ENCODE measurements at regions of chr9 and their contacts with region 1.

Region 1: GRCh38 chr9:71911253-71912074 is at the start of gene C9orf85:
- DNase-seq: peak; percentile 99
- H3K4me3 Mint-ChIP-seq: peak within 1 kb of the TSS; percentile 100
- H3K27ac Mint-ChIP-seq: peak within 1 kb of the TSS; percentile 99
- H3K4me1 Mint-ChIP-seq: peaks cover 56% of the 10 kb centered on the region
- H3K27me3 Mint-ChIP-seq: no peaks in the 10 kb centered on the region
- total RNA-seq, gene C9orf85: 9.4 and 11.6 TPM in 2 replicates

Region 2: DNA sequence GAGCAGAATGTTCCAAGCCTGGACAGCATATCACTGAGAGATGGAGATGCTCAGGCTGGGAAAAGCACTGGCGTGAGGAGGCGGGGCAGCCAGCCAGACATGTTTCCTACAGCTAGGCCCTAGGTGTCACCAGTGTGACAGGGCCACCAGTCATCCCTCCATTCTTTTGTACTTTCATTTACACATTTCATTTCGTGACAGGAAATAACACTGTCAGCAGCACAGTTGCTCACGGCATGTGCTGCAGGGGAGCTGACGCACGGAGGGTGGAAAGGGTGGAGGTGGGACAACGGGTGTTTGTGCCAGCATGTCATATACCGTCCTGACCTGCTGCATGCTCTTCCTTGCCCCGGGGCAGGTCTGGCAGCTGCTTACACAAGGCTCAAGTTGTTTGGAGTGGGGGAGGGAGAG is 128.3 kb before region 1 on chr9:
- intact Hi-C with region 1: loop called (anchors 1 kb)
- DNase-seq: peak; percentile 94
- H3K4me3 Mint-ChIP-seq: peak overlapping the region; percentile 80
- H3K27ac Mint-ChIP-seq: peak overlapping the region; percentile 95
- H3K4me1 Mint-ChIP-seq: peaks cover 43% of the 10 kb centered on the region
- H3K27me3 Mint-ChIP-seq: no peaks in the 10 kb centered on the region

Region 3: GRCh38 chr9:71795097-71795813 is 116.2 kb before region 1 on chr9:
- intact Hi-C with region 1: loop called (anchors 5 kb)
- DNase-seq: peak; percentile 76
- H3K4me3 Mint-ChIP-seq: peak overlapping the region; percentile 74
- H3K27ac Mint-ChIP-seq: peak overlapping the region; percentile 85
- H3K4me1 Mint-ChIP-seq: peaks cover 32% of the 10 kb centered on the region
- H3K27me3 Mint-ChIP-seq: no peaks in the 10 kb centered on the region

Region 4: GRCh38 chr9:71858812-71859211 is 52.7 kb before region 1 on chr9:
- intact Hi-C with region 1: loop called (anchors 1 kb)
- DNase-seq: peak; percentile 59
- H3K4me3 Mint-ChIP-seq: peak overlapping the region; percentile 8
- H3K27ac Mint-ChIP-seq: peak overlapping the region; percentile 38
- H3K4me1 Mint-ChIP-seq: peaks cover 19% of the 10 kb centered on the region
- H3K27me3 Mint-ChIP-seq: no peaks in the 10 kb centered on the region

Region 5: GRCh38 chr9:71897577-71897976 is 13.9 kb before region 1 on chr9:
- intact Hi-C with region 1: loop called (anchors 1 kb)
- DNase-seq: peak; percentile 80
- H3K4me3 Mint-ChIP-seq: peak overlapping the region; percentile 49
- H3K27ac Mint-ChIP-seq: peak overlapping the region; percentile 42
- H3K4me1 Mint-ChIP-seq: peaks cover 72% of the 10 kb centered on the region
- H3K27me3 Mint-ChIP-seq: no peaks in the 10 kb centered on the region

Region 6: DNA sequence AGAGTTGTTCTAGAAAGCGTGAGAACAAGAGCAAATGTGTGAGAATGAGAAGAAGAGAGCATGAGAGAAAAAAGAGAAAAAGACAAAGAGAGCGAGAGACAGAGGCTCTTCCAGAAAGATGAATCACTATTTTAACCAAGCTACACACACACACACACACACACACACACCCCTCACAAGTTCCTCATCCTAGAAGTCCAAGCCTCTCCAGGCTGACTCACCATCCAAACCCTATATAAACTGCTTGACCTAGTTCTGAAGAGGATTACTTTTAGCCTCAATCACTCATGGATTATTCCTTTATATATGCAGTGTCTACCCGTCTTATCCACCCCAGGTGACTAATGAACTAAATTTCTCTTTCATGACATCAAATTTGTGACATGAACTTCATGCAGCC is 111.4 kb after region 1 on chr9:
- intact Hi-C with region 1: loop called (anchors 5 kb)
- DNase-seq: no peak
- H3K4me3 Mint-ChIP-seq: no peak overlapping the region
- H3K27ac Mint-ChIP-seq: no peak overlapping the region
- H3K4me1 Mint-ChIP-seq: peaks cover 5% of the 10 kb centered on the region
- H3K27me3 Mint-ChIP-seq: no peaks in the 10 kb centered on the region

Region 7: DNA sequence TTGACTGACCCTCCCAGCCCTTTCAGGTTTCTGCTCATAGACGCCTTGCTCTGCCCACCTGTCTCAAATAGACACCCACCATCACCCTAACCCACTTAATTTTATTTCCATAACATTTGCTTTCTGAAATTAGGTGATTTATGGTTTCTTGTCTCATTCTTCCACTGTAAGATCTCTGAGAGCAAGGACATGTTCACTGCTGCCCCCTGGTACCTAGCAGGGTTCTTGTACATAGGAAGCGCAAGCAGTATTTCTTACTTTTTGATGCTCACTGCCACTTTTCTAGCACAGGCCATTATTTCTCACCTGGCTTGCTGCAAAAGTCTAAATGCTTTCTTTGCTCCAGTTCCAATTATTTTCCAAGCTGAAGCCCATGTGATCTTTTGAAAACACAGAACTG is 132.1 kb after region 1 on chr9:
- intact Hi-C with region 1: no loop called
- DNase-seq: no peak
- H3K4me3 Mint-ChIP-seq: no peak overlapping the region
- H3K27ac Mint-ChIP-seq: no peak overlapping the region
- H3K4me1 Mint-ChIP-seq: peaks cover 4% of the 10 kb centered on the region
- H3K27me3 Mint-ChIP-seq: peaks cover 20% of the 10 kb centered on the region

Measured in activated CD4-positive, alpha-beta T cell treated with anti-CD3 and anti-CD28 coated beads, Interleukin-2, amount 10 ng/mL, durations not matched to agents 24 days and 14 days (primary cell).